Adrenal gland (tissue), 19 donors: ENCODE measurements at regions of chr1 and their contacts with region 1.

Region 1: DNA sequence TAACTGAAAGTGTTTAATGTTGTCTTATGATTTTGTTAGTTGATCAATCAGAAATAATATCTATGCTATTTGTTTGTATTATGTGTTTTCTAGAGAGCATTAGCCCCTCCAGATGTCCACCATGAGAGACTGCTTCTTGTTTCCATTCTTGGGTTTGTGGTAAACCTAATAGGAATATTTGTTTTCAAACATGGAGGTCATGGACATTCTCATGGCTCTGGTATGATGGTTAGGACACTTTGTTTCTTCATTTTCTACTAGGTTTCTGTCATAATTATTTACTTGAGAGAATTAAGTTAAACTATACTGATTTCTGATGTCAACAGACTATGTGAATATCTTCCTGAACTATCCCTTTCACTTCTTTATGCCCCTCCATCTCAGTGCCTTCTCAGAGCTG is 16.1 kb downstream of the SLC30A7 start:
- DNase-seq: no peak
- H3K4me3 ChIP-seq: no peak overlapping the region
- H3K27ac ChIP-seq: no peak overlapping the region
- H3K4me1 ChIP-seq: peaks cover 0 to 4% of the 10 kb centered on the region in 2 donors
- H3K27me3 ChIP-seq: no peaks in the 10 kb centered on the region
- CTCF ChIP-seq: no peak
- POLR2A ChIP-seq: no peak

Region 2: GRCh38 chr1:101357444-101357986 is 445.5 kb after region 1 on chr1:
- intact Hi-C with region 1: loop called in 1 of 2 experiments (anchors 10 kb)
- DNase-seq: peak; percentile 47 to 82 (median 75)
- H3K4me3 ChIP-seq: no peak overlapping the region
- H3K27ac ChIP-seq: no peak overlapping the region
- H3K4me1 ChIP-seq: no peaks in the 10 kb centered on the region
- H3K27me3 ChIP-seq: no peaks in the 10 kb centered on the region
- CTCF ChIP-seq: peak; percentile 74 to 89 (median 83)
- POLR2A ChIP-seq: no peak